Ovary (tissue), 10 donors: ENCODE measurements at regions of chrX and their contacts with region 1.

Region 1: DNA sequence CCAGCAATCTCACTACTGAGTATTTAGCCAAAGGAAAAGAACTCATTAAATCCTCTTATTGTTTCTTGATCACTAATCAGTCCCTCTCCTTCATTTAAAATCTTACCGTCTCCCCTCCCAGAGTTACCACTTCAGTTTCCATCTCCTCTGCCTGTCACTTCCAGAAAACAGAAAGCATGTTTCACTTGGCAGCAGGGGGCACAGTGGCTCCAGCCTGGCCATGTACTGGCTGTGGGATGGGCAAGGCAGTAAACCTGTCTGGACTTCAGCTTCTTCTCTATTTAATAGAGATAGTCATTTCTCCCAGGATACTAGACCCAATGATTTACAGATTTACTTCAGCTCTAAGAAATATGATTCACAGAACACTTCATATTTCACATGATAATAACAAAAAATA is 63.2 kb downstream of the CD40LG start:
- DNase-seq: peak in 4 of 5 donors; percentile 25 to 36 (median 28)
- H3K4me3 ChIP-seq: no peak overlapping the region
- H3K27ac ChIP-seq: no peak overlapping the region
- H3K4me1 ChIP-seq: no peaks in the 10 kb centered on the region
- H3K27me3 ChIP-seq: no peaks in the 10 kb centered on the region
- CTCF ChIP-seq: no peak
- EP300 ChIP-seq: no peak
- POLR2A ChIP-seq: no peak

Region 2: DNA sequence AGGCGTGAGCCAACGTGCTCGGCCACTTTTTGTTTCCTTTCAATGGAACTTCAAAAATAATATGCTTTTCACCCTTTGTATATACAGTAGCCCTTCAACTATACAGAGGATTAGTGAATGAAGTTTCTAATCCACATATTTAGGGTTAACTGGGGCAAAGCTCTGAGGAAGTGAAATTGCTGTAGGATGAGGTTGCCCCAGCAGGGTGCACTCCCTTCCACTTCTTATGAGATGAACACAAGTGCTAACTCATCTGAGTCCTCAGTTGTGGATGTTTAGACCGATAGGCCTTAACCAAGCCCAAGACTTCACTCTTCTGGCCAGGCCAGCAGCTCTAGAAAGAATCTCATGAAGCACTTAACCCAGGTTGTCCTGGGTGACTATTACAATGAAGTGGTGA is 1510.8 kb before region 1 on chrX:
- intact Hi-C with region 1: no loop called
- DNase-seq: no peak
- H3K4me3 ChIP-seq: no peak overlapping the region
- H3K27ac ChIP-seq: no peak overlapping the region
- H3K4me1 ChIP-seq: no peaks in the 10 kb centered on the region
- H3K27me3 ChIP-seq: no peaks in the 10 kb centered on the region
- CTCF ChIP-seq: no peak
- EP300 ChIP-seq: no peak
- POLR2A ChIP-seq: no peak

Region 3: DNA sequence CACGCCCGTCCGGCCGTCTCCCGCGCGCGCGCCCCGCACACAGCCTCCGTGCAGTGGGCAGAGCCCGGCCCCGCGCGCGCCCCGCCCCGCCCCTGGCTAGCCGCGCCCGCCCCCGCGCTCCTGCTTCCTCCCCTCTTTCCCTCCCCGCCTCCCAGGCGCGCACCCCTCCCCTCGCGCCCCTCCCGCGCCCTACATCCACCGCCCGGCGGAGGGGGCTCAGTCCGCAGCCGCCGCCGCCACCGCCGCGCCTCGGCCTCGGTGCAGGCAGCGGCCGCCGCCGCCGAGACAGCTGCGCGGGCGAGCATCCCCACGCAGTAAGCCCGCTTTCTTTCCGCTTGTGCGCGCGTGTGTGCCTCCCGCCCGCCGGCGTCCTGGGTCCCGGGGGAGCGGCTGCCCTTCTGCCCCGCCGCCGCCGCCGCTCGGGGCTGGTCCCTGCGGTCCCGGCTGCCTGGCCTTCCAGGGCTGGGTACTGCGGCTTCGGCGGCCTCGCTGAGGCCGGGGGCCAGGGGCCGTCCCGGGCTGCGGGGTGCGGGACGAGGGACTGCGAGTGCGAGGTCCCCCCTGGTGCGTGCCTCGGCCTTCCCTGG is 563.7 kb before region 1 on chrX and contains the start of gene FHL1:
- intact Hi-C with region 1: no loop called
- DNase-seq: peak; percentile 63 to 79 (median 75)
- H3K4me3 ChIP-seq: peak within 1 kb of the TSS; percentile 66
- H3K27ac ChIP-seq: peak within 1 kb of the TSS; percentile 60 to 65
- H3K4me1 ChIP-seq: peaks cover 2% of the 10 kb centered on the region
- H3K27me3 ChIP-seq: no peaks in the 10 kb centered on the region
- CTCF ChIP-seq: no peak
- EP300 ChIP-seq: no peak
- POLR2A ChIP-seq: peak; percentile 29
- total RNA-seq, gene FHL1: 62.0 to 313 (median 98.5) TPM

Region 4: DNA sequence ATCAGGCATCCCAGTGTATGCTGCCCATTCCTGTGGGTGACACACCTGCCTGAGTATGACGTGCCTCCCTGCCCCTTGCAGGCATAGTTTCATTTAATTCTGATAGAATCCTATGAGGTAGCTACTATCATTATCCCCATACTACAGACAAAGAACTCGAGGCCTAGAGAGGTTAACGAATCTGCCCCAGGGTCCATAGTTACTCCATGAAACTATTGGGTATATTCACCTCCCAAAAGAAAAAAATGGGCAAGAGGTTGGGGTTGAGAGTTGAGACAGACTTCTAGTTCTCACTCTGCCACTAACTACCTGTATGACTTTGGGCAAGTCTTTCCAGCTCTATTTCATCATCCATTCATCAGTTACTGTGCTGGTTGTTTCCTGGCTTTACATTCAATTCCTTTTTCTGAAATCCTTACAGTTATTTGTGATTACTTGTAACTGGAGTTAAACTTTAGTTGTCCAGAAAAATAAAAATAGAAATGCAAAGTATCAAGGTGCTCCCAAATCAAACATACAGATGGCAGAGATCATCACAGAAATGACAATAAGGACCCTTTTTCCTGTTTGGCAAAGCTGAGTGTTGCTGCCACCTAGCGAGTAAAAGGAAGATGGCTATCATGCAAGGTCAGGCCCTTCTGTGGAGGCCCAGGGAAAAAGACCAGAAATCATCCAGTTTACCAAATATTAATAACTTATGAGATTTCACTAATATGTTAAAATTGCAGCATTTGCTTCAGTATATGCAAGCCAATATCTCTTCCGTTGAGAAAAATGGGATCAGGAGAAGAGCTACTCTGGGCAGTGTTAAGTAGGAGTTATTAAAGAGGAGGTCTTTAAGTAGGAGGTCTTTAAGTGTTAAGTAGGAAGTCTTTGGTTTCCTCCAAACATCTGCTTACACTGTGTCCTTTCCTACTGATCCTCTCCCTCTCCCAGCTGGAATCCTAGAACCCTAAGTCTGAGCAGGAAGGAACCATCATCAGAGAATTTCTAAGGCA is 442.8 kb before region 1 on chrX:
- intact Hi-C with region 1: no loop called
- DNase-seq: peak in 2 of 5 donors; percentile 32 to 50
- H3K4me3 ChIP-seq: no peak overlapping the region
- H3K27ac ChIP-seq: no peak overlapping the region
- H3K4me1 ChIP-seq: no peaks in the 10 kb centered on the region
- H3K27me3 ChIP-seq: no peaks in the 10 kb centered on the region
- CTCF ChIP-seq: peak; percentile 25 to 44 (median 25)
- EP300 ChIP-seq: no peak
- POLR2A ChIP-seq: no peak

Region 5: DNA sequence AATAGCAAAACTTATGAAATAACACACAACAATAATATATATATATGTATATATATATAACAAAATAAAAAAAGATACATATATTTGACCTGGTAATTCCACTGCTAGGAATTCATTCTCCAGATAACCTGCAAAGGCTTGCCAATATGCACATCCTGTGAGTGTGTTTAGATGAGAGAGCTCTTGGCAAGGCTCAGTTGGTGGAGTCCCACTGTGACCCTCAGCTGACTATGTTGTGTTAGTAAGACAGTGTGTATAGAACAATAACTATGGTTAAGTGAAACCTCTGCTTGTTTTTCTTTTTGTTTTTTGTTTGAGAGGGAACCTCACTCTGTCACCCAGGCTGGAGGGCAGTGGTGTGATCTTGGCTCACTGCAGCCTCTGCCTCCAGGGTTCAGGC is 208.9 kb after region 1 on chrX:
- intact Hi-C with region 1: loop called in 1 of 4 experiments (anchors 10 kb)
- DNase-seq: no peak
- H3K4me3 ChIP-seq: no peak overlapping the region
- H3K27ac ChIP-seq: no peak overlapping the region
- H3K4me1 ChIP-seq: no peaks in the 10 kb centered on the region
- H3K27me3 ChIP-seq: no peaks in the 10 kb centered on the region
- CTCF ChIP-seq: no peak
- EP300 ChIP-seq: no peak
- POLR2A ChIP-seq: no peak

Region 6: GRCh38 chrX:137118136-137118535 is 407.0 kb after region 1 on chrX:
- intact Hi-C with region 1: no loop called
- DNase-seq: no peak
- H3K4me3 ChIP-seq: no peak overlapping the region
- H3K27ac ChIP-seq: no peak overlapping the region
- H3K4me1 ChIP-seq: no peaks in the 10 kb centered on the region
- H3K27me3 ChIP-seq: no peaks in the 10 kb centered on the region
- CTCF ChIP-seq: no peak
- EP300 ChIP-seq: no peak
- POLR2A ChIP-seq: no peak